T-cell (primary cell): ENCODE measurements at regions of chr12 and their contacts with region 1.

Region 1: GRCh38 chr12:56117778-56118687 is at the start of gene ZC3H10:
- DNase-seq: peak; percentile 87 to 99 (median 96)
- ATAC-seq: peak; percentile 76 to 79 (median 76)
- H3K4me3 ChIP-seq: peak within 1 kb of the TSS; percentile 79 to 94
- H3K4me3 Mint-ChIP-seq: peak within 1 kb of the TSS; percentile 94 to 99 (median 94)
- H3K27ac ChIP-seq: peak within 1 kb of the TSS; percentile 92
- H3K27ac Mint-ChIP-seq: peak within 1 kb of the TSS; percentile 97 to 98
- H3K4me1 ChIP-seq: peaks cover 11 to 29% of the 10 kb centered on the region in 2 experiments
- H3K4me1 Mint-ChIP-seq: peaks cover 34 to 39% (median 37%) of the 10 kb centered on the region in 3 donors
- H3K27me3 ChIP-seq: no peaks in the 10 kb centered on the region
- H3K27me3 Mint-ChIP-seq: no peaks in the 10 kb centered on the region
- total RNA-seq, gene ZC3H10: 8.4 to 15.1 (median 11.4) TPM

Region 2: DNA sequence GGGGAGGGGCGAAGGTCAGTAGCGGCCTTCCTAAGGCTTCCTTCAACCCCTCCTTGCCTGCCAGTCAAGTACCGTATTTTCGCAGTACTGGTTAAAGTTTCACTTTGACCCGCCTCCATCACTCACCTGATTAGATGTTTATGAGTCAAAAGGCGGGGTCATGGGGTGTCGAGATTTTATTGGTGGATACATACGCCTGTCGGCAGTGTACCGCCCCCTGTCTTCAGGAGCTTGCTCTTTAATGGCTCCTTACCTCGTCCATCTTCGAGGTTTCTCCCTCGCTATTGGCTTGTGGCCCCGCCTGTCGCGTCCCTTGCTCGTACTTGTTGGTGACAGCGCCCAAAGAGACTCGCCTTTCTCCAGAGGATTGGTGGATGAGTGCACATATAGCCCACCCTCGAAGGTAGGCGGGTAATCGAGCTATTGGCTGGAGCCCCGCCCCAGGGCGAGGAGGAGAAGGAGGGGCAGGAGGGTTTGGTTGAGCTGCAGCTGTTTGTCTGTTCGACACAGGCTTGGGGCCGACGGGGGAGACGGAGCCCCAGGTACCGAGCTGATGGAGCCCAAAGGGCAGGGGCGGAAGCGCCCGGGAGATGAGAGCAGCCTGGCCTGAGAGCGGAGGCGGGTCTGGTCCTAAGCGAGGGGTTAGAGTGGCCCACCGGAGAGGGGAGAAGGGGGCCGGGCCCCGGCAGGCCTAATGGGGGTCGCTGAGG is 144.3 kb before region 1 on chr12 and contains the start of gene RAB5B:
- CTCF ChIA-PET with region 1: interaction called in 1 of 2 experiments, 10 read pairs
- POLR2A ChIA-PET with region 1: interaction called in 1 of 2 experiments, 6 read pairs
- DNase-seq: peak; percentile 92 to 100 (median 99)
- ATAC-seq: peak; percentile 91 to 93 (median 92)
- H3K4me3 ChIP-seq: peak within 1 kb of the TSS; percentile 69 to 89
- H3K4me3 Mint-ChIP-seq: no peak within 1 kb of the TSS
- H3K27ac ChIP-seq: peak within 1 kb of the TSS; percentile 70
- H3K27ac Mint-ChIP-seq: no peak within 1 kb of the TSS
- H3K4me1 ChIP-seq: peaks cover 18 to 21% of the 10 kb centered on the region in 2 experiments
- H3K4me1 Mint-ChIP-seq: peaks cover 22 to 27% (median 24%) of the 10 kb centered on the region in 3 donors
- H3K27me3 ChIP-seq: no peaks in the 10 kb centered on the region
- H3K27me3 Mint-ChIP-seq: no peaks in the 10 kb centered on the region
- total RNA-seq, gene RAB5B: 58.6 to 99.8 (median 85.7) TPM

Region 3: GRCh38 chr12:56152318-56153033 is 34.4 kb after region 1 on chr12 and contains the start of gene MYL6B:
- CTCF ChIA-PET with region 1: interaction called, 3 to 12 read pairs
- POLR2A ChIA-PET with region 1: interaction called in 1 of 2 experiments, 11 read pairs
- DNase-seq: peak; percentile 80 to 95 (median 89)
- ATAC-seq: peak; percentile 93 to 94 (median 93)
- H3K4me3 ChIP-seq: peak within 1 kb of the TSS; percentile 58 to 80
- H3K4me3 Mint-ChIP-seq: peak within 1 kb of the TSS; percentile 85 to 93 (median 93)
- H3K27ac ChIP-seq: peak within 1 kb of the TSS; percentile 87
- H3K27ac Mint-ChIP-seq: peak within 1 kb of the TSS; percentile 96 to 99
- H3K4me1 ChIP-seq: peaks cover 11 to 28% of the 10 kb centered on the region in 2 experiments
- H3K4me1 Mint-ChIP-seq: peaks cover 30 to 45% (median 44%) of the 10 kb centered on the region in 3 donors
- H3K27me3 ChIP-seq: no peaks in the 10 kb centered on the region
- H3K27me3 Mint-ChIP-seq: no peaks in the 10 kb centered on the region
- total RNA-seq, gene MYL6B: 5.9 to 12.4 (median 7.7) TPM

Region 4: DNA sequence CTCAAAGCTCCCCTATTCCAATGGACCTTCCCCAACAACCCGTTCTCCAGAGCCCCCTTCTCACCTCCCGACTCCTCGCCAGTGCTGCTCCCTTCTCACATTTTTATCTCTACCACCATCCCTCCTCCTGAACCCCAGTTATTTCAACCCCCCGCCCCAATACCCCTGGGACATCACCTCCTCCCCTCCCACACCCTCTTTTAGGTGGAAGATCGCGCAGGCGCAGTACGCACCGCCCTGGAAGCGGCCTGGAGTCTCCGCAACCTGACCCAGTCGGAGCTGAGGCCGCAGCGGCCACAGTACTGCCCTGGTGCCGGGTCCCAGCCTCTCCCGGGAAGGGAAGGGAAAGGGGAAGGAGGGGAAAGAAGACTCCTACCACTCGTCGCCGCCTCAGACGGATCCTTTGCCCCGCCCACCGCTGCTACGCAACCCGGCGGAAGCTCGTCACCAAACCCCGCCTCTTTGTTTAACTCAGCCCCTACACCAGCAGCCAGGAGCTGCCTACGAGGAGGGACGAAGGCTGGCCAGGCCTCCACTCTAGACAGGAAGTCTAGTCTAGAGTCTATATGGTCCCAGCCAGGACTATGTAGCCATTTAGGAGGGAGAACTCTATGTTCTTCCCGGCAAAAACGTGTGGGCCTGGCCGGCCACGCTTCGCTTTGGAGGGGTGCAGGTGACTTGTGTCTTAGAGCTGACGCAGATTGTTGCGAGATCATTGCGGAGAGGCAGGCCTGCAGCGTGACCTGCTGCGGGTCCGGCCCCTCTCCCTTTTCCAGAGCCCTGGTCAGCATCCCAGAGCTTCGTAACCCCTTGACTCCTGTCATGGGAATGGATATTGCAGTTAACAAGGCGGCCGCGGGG is 103.7 kb after region 1 on chr12 and contains the start of gene RNF41:
- CTCF ChIA-PET with region 1: interaction called in 1 of 2 experiments, 17 read pairs
- POLR2A ChIA-PET with region 1: interaction called in 1 of 2 experiments, 10 read pairs
- DNase-seq: peak; percentile 80 to 96 (median 89)
- ATAC-seq: peak; percentile 81 to 85 (median 82)
- H3K4me3 ChIP-seq: peak within 1 kb of the TSS; percentile 98
- H3K4me3 Mint-ChIP-seq: peak within 1 kb of the TSS; percentile 98 to 100 (median 98)
- H3K27ac ChIP-seq: peak within 1 kb of the TSS; percentile 94
- H3K27ac Mint-ChIP-seq: peak within 1 kb of the TSS; percentile 98 to 99
- H3K4me1 ChIP-seq: peaks cover 18 to 54% of the 10 kb centered on the region in 2 experiments
- H3K4me1 Mint-ChIP-seq: peaks cover 47 to 52% (median 49%) of the 10 kb centered on the region in 3 donors
- H3K27me3 ChIP-seq: no peaks in the 10 kb centered on the region
- H3K27me3 Mint-ChIP-seq: no peaks in the 10 kb centered on the region
- total RNA-seq, gene RNF41: 26.3 to 43.1 (median 39.4) TPM